ENCODE measurements at regions of chr12 and their contacts with region 1.

Region 1: DNA sequence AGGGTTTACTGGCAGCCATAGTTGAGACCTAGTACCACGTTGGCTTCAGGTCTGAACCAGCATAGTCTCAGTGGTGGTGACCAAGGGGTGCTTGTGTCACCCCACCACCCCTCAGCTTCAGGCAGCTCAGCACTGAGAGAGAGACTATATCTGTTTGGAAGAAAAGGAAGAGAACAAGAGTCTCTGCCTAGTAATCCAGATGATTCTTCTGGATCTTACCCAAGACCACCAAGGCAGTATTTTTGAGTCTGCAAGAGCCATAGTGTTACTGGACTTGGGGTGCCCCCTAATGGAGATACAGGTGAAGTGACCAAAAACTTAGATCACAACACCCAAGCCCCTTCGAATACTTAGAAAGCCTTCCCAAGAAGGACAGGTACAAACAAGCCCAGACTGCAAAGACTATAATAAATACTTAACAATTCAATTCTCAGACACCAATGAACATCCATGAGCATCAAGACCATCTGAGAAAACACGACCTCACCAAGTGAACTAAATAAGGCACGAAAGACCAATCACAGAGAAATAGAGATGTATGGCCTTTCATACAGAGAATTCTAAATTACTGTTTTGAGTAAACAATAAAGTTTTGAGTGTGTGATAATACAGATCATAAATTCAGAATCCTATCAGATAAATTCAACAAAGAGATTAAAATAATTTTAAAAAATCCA is 107.0 kb downstream of the HELB start:
- DNase-seq: peak; percentile 44
- ATAC-seq: no peak
- H3K4me3 ChIP-seq: no peak overlapping the region
- H3K4me3 Mint-ChIP-seq: no peak overlapping the region
- H3K27ac ChIP-seq: no peak overlapping the region
- H3K27ac Mint-ChIP-seq: no peak overlapping the region
- H3K4me1 ChIP-seq: no peaks in the 10 kb centered on the region
- H3K4me1 Mint-ChIP-seq: no peaks in the 10 kb centered on the region
- H3K27me3 ChIP-seq: no peaks in the 10 kb centered on the region
- H3K27me3 Mint-ChIP-seq: peaks cover 19% of the 10 kb centered on the region
- CTCF ChIP-seq: peak; percentile 71

Region 2: DNA sequence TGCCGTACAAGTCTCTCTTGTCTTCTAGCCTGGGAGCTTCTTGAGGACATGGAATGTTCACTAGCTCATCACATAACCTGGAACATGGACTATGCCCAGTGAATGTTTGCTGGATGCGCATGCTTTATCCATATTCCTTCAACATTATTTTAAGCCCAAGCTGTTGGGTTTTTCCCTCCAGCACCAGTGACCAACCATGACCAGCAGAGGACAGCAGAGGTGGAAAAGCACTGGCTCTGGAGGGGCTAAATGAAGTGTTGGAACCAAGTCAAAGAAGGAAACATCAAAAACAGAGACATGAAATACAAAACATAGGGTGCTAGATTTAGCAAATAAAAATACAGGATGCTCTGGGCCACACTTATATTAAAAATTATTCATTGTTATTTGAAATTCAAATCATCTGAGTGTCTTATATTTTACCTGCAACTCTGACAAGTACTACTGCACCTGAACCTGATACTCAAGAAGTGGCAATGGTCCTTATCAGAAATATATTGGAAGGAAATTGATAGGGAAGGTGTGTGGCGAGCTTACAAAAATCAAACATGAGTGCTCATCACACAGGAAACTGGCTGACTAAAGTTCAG is 130.1 kb before region 1 on chr12:
- CTCF ChIA-PET with region 1: no interaction called
- POLR2A ChIA-PET with region 1: no interaction called
- intact Hi-C with region 1: loop called (anchors 1 kb)
- DNase-seq: no peak
- ATAC-seq: no peak
- H3K4me3 ChIP-seq: no peak overlapping the region
- H3K4me3 Mint-ChIP-seq: no peak overlapping the region
- H3K27ac ChIP-seq: no peak overlapping the region
- H3K27ac Mint-ChIP-seq: no peak overlapping the region
- H3K4me1 ChIP-seq: no peaks in the 10 kb centered on the region
- H3K4me1 Mint-ChIP-seq: no peaks in the 10 kb centered on the region
- H3K27me3 ChIP-seq: peaks cover 0 to 3% (median 0%) of the 10 kb centered on the region in 4 experiments
- H3K27me3 Mint-ChIP-seq: peaks cover 15% of the 10 kb centered on the region
- CTCF ChIP-seq: no peak

Region 3: GRCh38 chr12:66423266-66423665 is 13.9 kb after region 1 on chr12:
- CTCF ChIA-PET with region 1: no interaction called
- POLR2A ChIA-PET with region 1: no interaction called
- intact Hi-C with region 1: no loop called
- DNase-seq: no peak
- ATAC-seq: no peak
- H3K4me3 ChIP-seq: no peak overlapping the region
- H3K4me3 Mint-ChIP-seq: no peak overlapping the region
- H3K27ac ChIP-seq: no peak overlapping the region
- H3K27ac Mint-ChIP-seq: no peak overlapping the region
- H3K4me1 ChIP-seq: no peaks in the 10 kb centered on the region
- H3K4me1 Mint-ChIP-seq: no peaks in the 10 kb centered on the region
- H3K27me3 ChIP-seq: no peaks in the 10 kb centered on the region
- H3K27me3 Mint-ChIP-seq: no peaks in the 10 kb centered on the region
- CTCF ChIP-seq: no peak